ENCODE measurements at regions of chr3 and their contacts with region 1.

Region 1: DNA sequence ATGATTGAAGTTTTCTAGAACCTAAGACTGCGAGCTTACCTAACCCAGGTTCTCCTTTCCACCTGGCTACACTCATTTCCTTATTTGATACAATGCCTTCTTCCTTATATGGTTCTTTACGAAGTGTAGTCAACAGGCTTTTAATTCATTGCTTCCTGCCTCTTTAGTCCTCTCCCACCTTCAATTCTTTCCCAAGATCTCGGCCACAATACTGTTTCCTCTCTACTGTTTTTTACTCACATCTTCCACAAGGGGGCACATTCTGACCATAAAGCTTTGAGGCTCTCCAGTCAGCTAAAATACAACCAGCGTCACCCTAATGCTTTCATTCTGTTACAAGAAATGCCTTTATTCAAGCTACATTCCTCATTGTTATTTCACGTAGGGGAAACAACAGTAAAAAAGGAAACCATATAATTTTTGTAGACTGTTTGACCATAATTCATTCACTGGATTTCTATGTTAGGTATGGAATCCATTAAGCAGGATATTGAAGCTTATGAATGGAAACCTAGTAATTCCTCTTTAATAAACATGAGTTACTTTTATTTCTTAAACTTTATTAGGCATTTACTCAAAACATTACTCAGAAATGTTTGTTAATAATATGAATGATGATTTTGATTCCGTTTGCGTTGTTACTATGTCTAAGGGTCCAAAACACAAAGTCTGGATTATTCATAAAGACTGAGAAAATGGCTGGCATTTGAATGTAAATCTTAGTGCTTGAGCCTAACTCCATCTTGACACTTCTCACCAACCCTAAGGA is 29.5 kb upstream of the VEPH1 start:
- DNase-seq: no peak
- H3K4me3 Mint-ChIP-seq: no peak overlapping the region
- H3K27ac Mint-ChIP-seq: no peak overlapping the region
- H3K4me1 Mint-ChIP-seq: no peaks in the 10 kb centered on the region
- H3K27me3 Mint-ChIP-seq: no peaks in the 10 kb centered on the region

Region 2: DNA sequence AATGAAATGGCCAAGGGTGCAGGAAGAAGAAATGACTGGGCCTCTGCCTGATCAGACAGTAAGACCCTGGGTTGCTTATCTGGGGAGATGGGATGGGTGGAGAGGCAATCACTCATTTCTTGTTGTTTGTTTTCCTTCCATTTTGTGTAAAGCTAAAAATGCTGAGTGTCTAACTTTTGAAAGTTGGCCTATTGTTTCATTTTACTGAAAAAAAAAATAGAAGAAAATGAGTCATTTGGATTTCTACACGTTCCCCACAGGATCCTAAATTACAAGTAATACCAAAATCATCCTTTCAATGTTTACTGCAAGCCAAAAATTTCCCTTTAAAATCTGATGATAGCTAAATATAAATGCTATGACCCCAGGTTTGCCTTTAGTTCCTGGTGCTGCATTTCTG is 65.5 kb before region 1 on chr3:
- CTCF ChIA-PET with region 1: no interaction called
- DNase-seq: no peak
- H3K4me3 Mint-ChIP-seq: no peak overlapping the region
- H3K27ac Mint-ChIP-seq: no peak overlapping the region
- H3K4me1 Mint-ChIP-seq: no peaks in the 10 kb centered on the region
- H3K27me3 Mint-ChIP-seq: no peaks in the 10 kb centered on the region

Region 3: DNA sequence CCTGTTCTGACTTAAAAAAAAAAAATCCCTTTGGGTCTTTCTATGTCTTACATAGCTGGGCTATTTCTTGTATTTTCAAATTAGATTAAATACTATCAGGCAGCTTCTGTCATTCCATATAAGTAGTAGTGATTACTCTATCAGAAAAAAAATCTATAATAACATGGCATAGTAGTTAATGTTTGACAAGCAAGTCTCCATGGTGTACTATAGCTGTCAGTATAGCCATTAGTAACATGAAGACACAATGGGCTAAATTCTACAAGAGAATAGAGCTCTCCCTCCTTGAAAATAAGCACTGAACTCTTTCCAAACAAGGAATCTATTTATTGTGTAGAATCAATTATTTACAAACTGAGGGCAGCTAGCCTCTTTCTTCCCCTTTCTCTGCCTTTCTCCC is 10.1 kb before region 1 on chr3:
- CTCF ChIA-PET with region 1: interaction called, 10 read pairs
- DNase-seq: no peak
- H3K4me3 Mint-ChIP-seq: no peak overlapping the region
- H3K27ac Mint-ChIP-seq: no peak overlapping the region
- H3K4me1 Mint-ChIP-seq: no peaks in the 10 kb centered on the region
- H3K27me3 Mint-ChIP-seq: no peaks in the 10 kb centered on the region

Region 4: DNA sequence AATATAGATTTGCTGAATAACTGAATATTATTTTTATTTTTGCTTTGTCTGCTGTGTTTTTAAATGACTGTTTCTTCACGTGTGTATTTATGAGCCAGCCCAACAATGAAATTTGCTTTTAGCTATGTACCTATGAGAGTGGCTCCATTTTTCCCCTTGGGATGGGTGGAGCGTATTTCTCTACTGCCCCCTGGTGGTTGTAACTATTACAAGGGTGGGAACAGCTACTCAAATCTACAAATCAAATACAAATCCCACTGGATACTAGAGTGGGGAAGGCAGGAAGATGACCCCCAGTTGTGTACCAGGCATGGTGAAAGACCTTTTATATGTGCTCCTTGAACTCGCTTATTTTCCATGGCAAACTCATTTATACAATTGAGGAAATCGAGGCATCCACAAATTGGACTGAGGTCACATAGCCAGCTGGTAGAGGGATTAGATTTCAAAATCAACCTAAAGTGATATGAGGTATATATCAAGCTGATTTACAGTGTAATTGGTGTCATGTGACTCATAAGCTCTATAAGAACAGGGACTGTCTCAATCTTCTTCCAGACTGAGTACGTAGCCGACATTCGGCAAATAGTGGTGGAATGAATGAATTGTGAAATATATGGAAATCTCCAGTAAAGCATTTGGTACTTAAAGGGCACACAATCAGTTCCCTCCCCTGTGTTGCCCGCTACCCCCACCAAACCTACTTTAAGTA is 40.0 kb after region 1 on chr3:
- CTCF ChIA-PET with region 1: interaction called, 108 read pairs
- DNase-seq: peak; percentile 27
- H3K4me3 Mint-ChIP-seq: no peak overlapping the region
- H3K27ac Mint-ChIP-seq: no peak overlapping the region
- H3K4me1 Mint-ChIP-seq: no peaks in the 10 kb centered on the region
- H3K27me3 Mint-ChIP-seq: peaks cover 4% of the 10 kb centered on the region

Region 5: DNA sequence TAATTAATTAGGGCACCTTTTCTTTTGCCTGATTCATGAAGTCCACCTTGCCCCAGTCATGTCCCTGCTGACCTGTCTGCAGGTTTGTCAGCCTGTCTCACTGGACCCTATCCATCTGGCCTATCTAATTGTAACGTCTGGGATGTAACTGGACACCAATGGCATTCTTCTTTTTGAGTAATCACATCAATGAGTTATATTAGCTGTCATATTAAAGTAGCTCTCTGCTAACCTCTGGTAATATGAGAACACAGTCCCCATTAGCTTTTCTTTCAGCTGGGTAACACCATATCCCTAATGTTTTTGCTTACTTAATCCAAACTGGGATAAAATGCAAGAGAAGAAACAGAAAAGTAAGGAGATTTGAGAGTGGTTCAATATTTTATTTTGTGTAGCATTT is 136.7 kb after region 1 on chr3:
- CTCF ChIA-PET with region 1: no interaction called
- DNase-seq: no peak
- H3K4me3 Mint-ChIP-seq: no peak overlapping the region
- H3K27ac Mint-ChIP-seq: no peak overlapping the region
- H3K4me1 Mint-ChIP-seq: no peaks in the 10 kb centered on the region
- H3K27me3 Mint-ChIP-seq: no peaks in the 10 kb centered on the region

Measured in activated naive CD4-positive, alpha-beta T cell treated with anti-CD3 and anti-CD28 coated beads, Interleukin-2, amount 10 ng/mL, durations not matched to agents 7 days and 5 days (primary cell).